Common myeloid progenitor, CD34-positive (primary cell): ENCODE measurements at regions of chr7 and their contacts with region 1.

Region 1: GRCh38 chr7:80677629-80678028 is 39.2 kb downstream of the CD36 start:
- DNase-seq: no peak
- H3K4me3 ChIP-seq: no peak overlapping the region
- H3K27ac ChIP-seq: no peak overlapping the region
- H3K4me1 ChIP-seq: peaks cover 0 to 3% (median 0%) of the 10 kb centered on the region in 4 experiments
- H3K27me3 ChIP-seq: no peaks in the 10 kb centered on the region

Region 2: GRCh38 chr7:80488406-80488805 is 189.2 kb before region 1 on chr7:
- CTCF ChIA-PET with region 1: no interaction called
- POLR2A ChIA-PET with region 1: no interaction called
- DNase-seq: no peak
- H3K4me3 ChIP-seq: no peak overlapping the region
- H3K27ac ChIP-seq: no peak overlapping the region
- H3K4me1 ChIP-seq: peaks cover 0 to 3% (median 0%) of the 10 kb centered on the region in 4 experiments
- H3K27me3 ChIP-seq: no peaks in the 10 kb centered on the region

Region 3: GRCh38 chr7:80552304-80552703 is 125.3 kb before region 1 on chr7:
- CTCF ChIA-PET with region 1: no interaction called
- POLR2A ChIA-PET with region 1: no interaction called
- DNase-seq: no peak
- H3K4me3 ChIP-seq: no peak overlapping the region
- H3K27ac ChIP-seq: no peak overlapping the region
- H3K4me1 ChIP-seq: no peaks in the 10 kb centered on the region
- H3K27me3 ChIP-seq: no peaks in the 10 kb centered on the region

Region 4: DNA sequence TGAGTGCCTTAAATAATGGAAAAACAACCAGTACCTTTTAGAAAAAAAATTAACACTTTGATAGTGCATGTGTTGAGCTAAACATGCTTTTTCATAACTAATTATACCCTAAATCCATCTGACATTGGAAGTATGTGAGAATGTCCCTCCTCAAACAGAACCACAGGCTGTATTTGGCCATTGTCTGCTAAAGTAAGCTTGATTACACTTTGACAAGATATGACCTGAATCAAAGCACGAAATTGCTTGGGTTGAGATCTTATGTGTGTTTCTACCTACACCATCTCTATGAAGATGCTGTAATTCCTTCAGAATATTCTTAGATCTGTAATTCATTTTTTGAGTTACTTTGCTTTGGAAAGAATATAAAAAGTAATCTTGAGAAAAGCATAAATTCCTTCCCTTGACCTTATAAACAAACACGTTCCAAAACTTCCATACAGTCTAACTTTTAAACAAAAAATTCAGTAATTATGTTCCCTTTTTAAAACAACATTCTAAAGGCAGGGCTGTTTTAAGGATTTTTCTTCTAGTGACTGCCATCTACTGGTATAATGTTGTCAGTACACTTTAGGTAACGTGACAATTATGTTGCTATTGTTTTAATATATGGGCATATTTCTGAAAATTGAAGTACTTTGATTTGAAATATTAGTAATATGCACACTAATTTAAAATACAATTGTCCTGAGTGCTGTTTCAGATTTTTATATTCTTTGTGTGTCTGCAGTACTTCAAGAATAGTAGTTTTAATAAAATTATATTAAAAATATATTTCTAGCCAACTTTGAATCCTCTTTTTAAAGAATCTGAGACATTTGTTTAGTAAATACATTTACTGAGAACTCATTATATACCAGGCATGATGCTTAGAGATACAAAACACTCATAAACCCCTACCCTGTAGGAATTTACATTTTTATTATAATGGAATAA is 18.2 kb before region 1 on chr7:
- CTCF ChIA-PET with region 1: interaction called, 15 read pairs
- POLR2A ChIA-PET with region 1: no interaction called
- DNase-seq: peak; percentile 28 to 66 (median 66)
- H3K4me3 ChIP-seq: no peak overlapping the region
- H3K27ac ChIP-seq: no peak overlapping the region
- H3K4me1 ChIP-seq: peaks cover 0 to 5% (median under 1%) of the 10 kb centered on the region in 4 experiments
- H3K27me3 ChIP-seq: no peaks in the 10 kb centered on the region

Region 5: DNA sequence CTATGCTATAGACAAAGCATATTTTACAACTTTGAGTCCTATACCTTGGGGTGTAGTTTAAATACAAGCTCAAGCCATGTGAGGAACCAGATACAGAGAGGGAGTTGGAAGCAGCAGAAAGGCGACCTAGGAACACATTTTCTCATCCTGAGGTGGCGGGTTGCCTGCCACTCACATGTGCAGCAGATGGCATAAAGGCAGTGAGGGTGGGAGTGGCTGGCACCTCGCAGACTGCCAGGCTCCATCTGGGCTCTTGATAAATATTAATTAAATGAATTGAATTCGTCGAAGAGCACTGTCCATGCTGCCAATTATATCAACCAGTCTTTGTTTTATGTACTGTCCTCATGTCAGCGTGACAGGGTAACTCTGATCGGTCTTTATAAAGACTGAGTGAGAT is 320.2 kb after region 1 on chr7:
- CTCF ChIA-PET with region 1: no interaction called
- POLR2A ChIA-PET with region 1: no interaction called
- DNase-seq: no peak
- H3K4me3 ChIP-seq: no peak overlapping the region
- H3K27ac ChIP-seq: no peak overlapping the region
- H3K4me1 ChIP-seq: no peaks in the 10 kb centered on the region
- H3K27me3 ChIP-seq: no peaks in the 10 kb centered on the region